ENCODE measurements at regions of chr18 and their contacts with region 1.

Region 1: GRCh38 chr18:78561757-78562445 is 417.7 kb upstream of the SALL3 start:
- DNase-seq: peak in 6 of 10 donors; percentile 21 to 75 (median 60)
- H3K4me3 ChIP-seq: peak overlapping the region in 53 of 59 donors; percentile 2 to 65 (median 31)
- H3K27ac ChIP-seq: peak overlapping the region in 4 of 59 donors; percentile 23 to 49 (median 32)
- H3K27me3 ChIP-seq: peaks cover 0 to 10% (median 0%) of the 10 kb centered on the region in 45 donors
- CTCF ChIP-seq: peak in 1 of 56 donors; percentile 9

Region 2: GRCh38 chr18:78505851-78506461 is 55.9 kb before region 1 on chr18:
- intact Hi-C with region 1: loop called in 1 of 2 experiments (anchors 5 kb)
- DNase-seq: peak in 6 of 10 donors; percentile 26 to 66 (median 51)
- H3K4me3 ChIP-seq: peak overlapping the region in 57 of 59 donors; percentile 4 to 65 (median 39)
- H3K27ac ChIP-seq: peak overlapping the region in 18 of 59 donors; percentile 17 to 69 (median 40)
- H3K27me3 ChIP-seq: peaks cover 0 to 14% (median 0%) of the 10 kb centered on the region in 45 donors
- CTCF ChIP-seq: peak in 41 of 56 donors; percentile 13 to 63 (median 35)

Measured in dorsolateral prefrontal cortex (tissue), 120 donors.